Caco-2 (cell line): ENCODE measurements at regions of chr21 and their contacts with region 1.

Region 1: GRCh38 chr21:33412832-33413519 is 9.8 kb downstream of the IFNGR2 start:
- DNase-seq: peak; percentile 88 to 93
- H3K4me3 ChIP-seq: no peak overlapping the region
- H3K4me3 Mint-ChIP-seq: peak overlapping the region; percentile 64
- H3K27ac Mint-ChIP-seq: peak overlapping the region; percentile 93
- H3K4me1 ChIP-seq: peaks cover 52% of the 10 kb centered on the region
- H3K4me1 Mint-ChIP-seq: peaks cover 38% of the 10 kb centered on the region
- H3K27me3 ChIP-seq: no peaks in the 10 kb centered on the region
- H3K27me3 Mint-ChIP-seq: no peaks in the 10 kb centered on the region
- CTCF ChIP-seq: no peak

Region 2: GRCh38 chr21:32653311-32653901 is 759.6 kb before region 1 on chr21:
- CTCF ChIA-PET with region 1: no interaction called
- POLR2A ChIA-PET with region 1: no interaction called
- intact Hi-C with region 1: no loop called
- DNase-seq: peak in 1 of 2 experiments; percentile 49
- H3K4me3 ChIP-seq: no peak overlapping the region
- H3K4me3 Mint-ChIP-seq: no peak overlapping the region
- H3K27ac Mint-ChIP-seq: no peak overlapping the region
- H3K4me1 ChIP-seq: no peaks in the 10 kb centered on the region
- H3K4me1 Mint-ChIP-seq: no peaks in the 10 kb centered on the region
- H3K27me3 ChIP-seq: no peaks in the 10 kb centered on the region
- H3K27me3 Mint-ChIP-seq: no peaks in the 10 kb centered on the region
- CTCF ChIP-seq: peak; percentile 59 to 68

Region 3: GRCh38 chr21:33157303-33157702 is 255.7 kb before region 1 on chr21:
- CTCF ChIA-PET with region 1: no interaction called
- POLR2A ChIA-PET with region 1: no interaction called
- intact Hi-C with region 1: no loop called
- DNase-seq: peak in 1 of 2 experiments; percentile 13
- H3K4me3 ChIP-seq: no peak overlapping the region
- H3K4me3 Mint-ChIP-seq: no peak overlapping the region
- H3K27ac Mint-ChIP-seq: no peak overlapping the region
- H3K4me1 ChIP-seq: peaks cover 13% of the 10 kb centered on the region
- H3K4me1 Mint-ChIP-seq: peaks cover 19% of the 10 kb centered on the region
- H3K27me3 ChIP-seq: no peaks in the 10 kb centered on the region
- H3K27me3 Mint-ChIP-seq: peaks cover 3% of the 10 kb centered on the region
- CTCF ChIP-seq: no peak

Region 4: DNA sequence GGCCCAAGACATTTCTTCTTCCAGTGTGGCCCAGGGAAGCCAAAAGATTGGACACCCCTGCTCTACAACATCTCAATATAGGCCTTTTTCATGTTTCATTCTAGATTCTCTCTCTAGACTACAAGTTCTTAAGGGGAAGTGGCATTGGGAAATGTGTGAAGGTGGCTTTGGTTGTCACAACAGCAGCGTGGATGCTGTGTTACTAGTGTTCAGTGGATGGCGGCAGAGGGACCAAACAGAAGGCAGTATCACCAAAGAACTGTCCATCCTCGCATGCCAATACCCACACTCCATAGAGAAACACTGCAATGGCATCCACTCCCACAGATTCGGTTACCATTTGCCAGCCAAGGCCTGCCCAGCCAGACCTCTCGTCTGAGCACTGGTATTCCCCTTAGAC is 207.5 kb before region 1 on chr21:
- CTCF ChIA-PET with region 1: no interaction called
- POLR2A ChIA-PET with region 1: no interaction called
- intact Hi-C with region 1: no loop called
- DNase-seq: no peak
- H3K4me3 ChIP-seq: no peak overlapping the region
- H3K4me3 Mint-ChIP-seq: peak overlapping the region; percentile 60
- H3K27ac Mint-ChIP-seq: peak overlapping the region; percentile 77
- H3K4me1 ChIP-seq: peaks cover 33% of the 10 kb centered on the region
- H3K4me1 Mint-ChIP-seq: peaks cover 36% of the 10 kb centered on the region
- H3K27me3 ChIP-seq: no peaks in the 10 kb centered on the region
- H3K27me3 Mint-ChIP-seq: no peaks in the 10 kb centered on the region
- CTCF ChIP-seq: no peak

Region 5: GRCh38 chr21:33434770-33435360 is 21.9 kb after region 1 on chr21:
- CTCF ChIA-PET with region 1: interaction called, 4 read pairs
- POLR2A ChIA-PET with region 1: no interaction called
- intact Hi-C with region 1: loop called (anchors 1 kb)
- DNase-seq: no peak
- H3K4me3 ChIP-seq: no peak overlapping the region
- H3K4me3 Mint-ChIP-seq: no peak overlapping the region
- H3K27ac Mint-ChIP-seq: no peak overlapping the region
- H3K4me1 ChIP-seq: no peaks in the 10 kb centered on the region
- H3K4me1 Mint-ChIP-seq: no peaks in the 10 kb centered on the region
- H3K27me3 ChIP-seq: no peaks in the 10 kb centered on the region
- H3K27me3 Mint-ChIP-seq: no peaks in the 10 kb centered on the region
- CTCF ChIP-seq: no peak

Region 6: DNA sequence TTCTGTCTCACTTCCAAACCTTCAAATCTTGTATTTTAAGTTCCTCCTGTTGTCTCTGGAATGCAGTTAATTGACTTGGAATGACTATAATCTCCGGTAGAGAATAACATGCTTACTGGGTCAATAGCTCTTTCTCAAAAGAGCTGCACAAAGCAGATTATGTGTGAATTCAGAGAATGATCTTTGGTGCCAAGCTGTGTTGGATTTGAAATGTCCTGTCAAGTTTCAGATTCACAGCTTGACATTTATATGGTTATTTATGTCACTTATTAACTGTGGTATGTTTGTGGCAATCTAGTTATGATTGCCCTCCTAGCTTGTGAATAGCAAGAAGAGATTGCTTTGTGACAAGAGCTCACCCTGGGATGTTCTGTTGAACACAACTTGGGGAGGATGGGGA is 822.5 kb after region 1 on chr21:
- CTCF ChIA-PET with region 1: no interaction called
- POLR2A ChIA-PET with region 1: no interaction called
- intact Hi-C with region 1: no loop called
- DNase-seq: no peak
- H3K4me3 ChIP-seq: no peak overlapping the region
- H3K4me3 Mint-ChIP-seq: no peak overlapping the region
- H3K27ac Mint-ChIP-seq: no peak overlapping the region
- H3K4me1 ChIP-seq: no peaks in the 10 kb centered on the region
- H3K4me1 Mint-ChIP-seq: no peaks in the 10 kb centered on the region
- H3K27me3 ChIP-seq: no peaks in the 10 kb centered on the region
- H3K27me3 Mint-ChIP-seq: no peaks in the 10 kb centered on the region
- CTCF ChIP-seq: no peak